ENCODE measurements at regions of chr14 and their contacts with region 1.

Region 1: GRCh38 chr14:61620130-61620946 is 75.0 kb upstream of the HIF1A start:
- DNase-seq: peak; percentile 74
- ATAC-seq: peak; percentile 93
- H3K4me3 Mint-ChIP-seq: no peak overlapping the region
- H3K27ac Mint-ChIP-seq: peak overlapping the region; percentile 68
- H3K4me1 Mint-ChIP-seq: peaks cover 64% of the 10 kb centered on the region
- H3K27me3 Mint-ChIP-seq: no peaks in the 10 kb centered on the region
- CTCF ChIP-seq: no peak

Region 2: GRCh38 chr14:60815371-60815770 is 805.0 kb before region 1 on chr14:
- CTCF ChIA-PET with region 1: no interaction called
- POLR2A ChIA-PET with region 1: no interaction called
- intact Hi-C with region 1: no loop called
- DNase-seq: no peak
- ATAC-seq: no peak
- H3K4me3 Mint-ChIP-seq: no peak overlapping the region
- H3K27ac Mint-ChIP-seq: no peak overlapping the region
- H3K4me1 Mint-ChIP-seq: no peaks in the 10 kb centered on the region
- H3K27me3 Mint-ChIP-seq: no peaks in the 10 kb centered on the region
- CTCF ChIP-seq: no peak

Region 3: GRCh38 chr14:61662437-61663311 is 42.3 kb after region 1 on chr14:
- CTCF ChIA-PET with region 1: no interaction called
- POLR2A ChIA-PET with region 1: no interaction called
- intact Hi-C with region 1: loop called (anchors 2 kb)
- DNase-seq: peak; percentile 81
- ATAC-seq: peak; percentile 85
- H3K4me3 Mint-ChIP-seq: peak overlapping the region; percentile 51
- H3K27ac Mint-ChIP-seq: peak overlapping the region; percentile 97
- H3K4me1 Mint-ChIP-seq: peaks cover 61% of the 10 kb centered on the region
- H3K27me3 Mint-ChIP-seq: no peaks in the 10 kb centered on the region
- CTCF ChIP-seq: no peak

Region 4: GRCh38 chr14:61730756-61731373 is 110.5 kb after region 1 on chr14:
- CTCF ChIA-PET with region 1: no interaction called
- POLR2A ChIA-PET with region 1: no interaction called
- intact Hi-C with region 1: no loop called
- DNase-seq: no peak
- ATAC-seq: no peak
- H3K4me3 Mint-ChIP-seq: no peak overlapping the region
- H3K27ac Mint-ChIP-seq: peak overlapping the region; percentile 60
- H3K4me1 Mint-ChIP-seq: peaks cover 49% of the 10 kb centered on the region
- H3K27me3 Mint-ChIP-seq: no peaks in the 10 kb centered on the region
- CTCF ChIP-seq: peak; percentile 49